Activated CD4-positive, alpha-beta memory T cell treated with anti-CD3 and anti-CD28 coated beads for 36 hours (primary cell): ENCODE measurements at regions of chr19 and their contacts with region 1.

Region 1: DNA sequence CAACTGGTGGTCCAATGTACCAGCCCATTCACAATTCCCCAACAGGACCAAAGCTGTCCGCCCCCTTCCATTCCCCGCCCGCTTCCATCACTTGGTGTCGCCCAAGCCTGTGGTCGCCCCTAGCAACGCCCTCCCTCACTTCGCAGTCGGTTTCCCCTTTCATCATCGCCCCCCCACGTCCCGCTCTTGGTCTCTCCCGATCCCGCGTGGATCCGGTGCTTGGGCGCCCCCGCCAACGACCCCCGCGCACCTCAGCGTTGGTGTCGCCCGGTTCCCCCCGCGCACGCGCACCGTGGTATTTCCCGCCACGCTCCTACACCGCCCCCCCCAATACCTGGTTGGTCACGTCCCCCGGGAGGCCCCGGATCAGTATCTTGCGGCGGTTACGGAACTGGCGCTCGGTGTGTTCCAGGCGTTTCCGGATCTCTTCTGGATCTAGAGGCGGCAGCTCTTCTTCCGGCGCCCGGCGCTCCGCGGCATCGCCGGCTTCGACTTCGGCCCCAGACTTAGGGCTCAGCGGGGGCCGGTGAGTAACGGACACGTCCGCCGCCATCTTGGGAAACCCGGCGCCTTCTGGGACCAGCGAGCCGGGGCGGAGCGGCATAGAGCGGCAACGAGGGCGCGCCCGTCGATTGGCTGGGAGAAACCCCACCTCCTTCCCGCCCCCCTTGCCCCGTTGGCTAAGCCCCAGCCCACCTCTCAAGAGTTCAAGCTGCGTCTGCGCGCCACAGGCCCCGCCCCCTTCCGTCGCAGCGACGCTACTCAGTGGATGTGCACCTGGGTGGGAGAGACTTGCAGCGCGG is at the start of gene RAVER1:
- DNase-seq: peak; percentile 99
- H3K4me3 Mint-ChIP-seq: peak within 1 kb of the TSS; percentile 95
- H3K27ac Mint-ChIP-seq: peak within 1 kb of the TSS; percentile 96
- H3K4me1 Mint-ChIP-seq: peaks cover 37% of the 10 kb centered on the region
- H3K27me3 Mint-ChIP-seq: no peaks in the 10 kb centered on the region
- total RNA-seq, gene RAVER1: 81.5 to 85.0 TPM

Region 2: DNA sequence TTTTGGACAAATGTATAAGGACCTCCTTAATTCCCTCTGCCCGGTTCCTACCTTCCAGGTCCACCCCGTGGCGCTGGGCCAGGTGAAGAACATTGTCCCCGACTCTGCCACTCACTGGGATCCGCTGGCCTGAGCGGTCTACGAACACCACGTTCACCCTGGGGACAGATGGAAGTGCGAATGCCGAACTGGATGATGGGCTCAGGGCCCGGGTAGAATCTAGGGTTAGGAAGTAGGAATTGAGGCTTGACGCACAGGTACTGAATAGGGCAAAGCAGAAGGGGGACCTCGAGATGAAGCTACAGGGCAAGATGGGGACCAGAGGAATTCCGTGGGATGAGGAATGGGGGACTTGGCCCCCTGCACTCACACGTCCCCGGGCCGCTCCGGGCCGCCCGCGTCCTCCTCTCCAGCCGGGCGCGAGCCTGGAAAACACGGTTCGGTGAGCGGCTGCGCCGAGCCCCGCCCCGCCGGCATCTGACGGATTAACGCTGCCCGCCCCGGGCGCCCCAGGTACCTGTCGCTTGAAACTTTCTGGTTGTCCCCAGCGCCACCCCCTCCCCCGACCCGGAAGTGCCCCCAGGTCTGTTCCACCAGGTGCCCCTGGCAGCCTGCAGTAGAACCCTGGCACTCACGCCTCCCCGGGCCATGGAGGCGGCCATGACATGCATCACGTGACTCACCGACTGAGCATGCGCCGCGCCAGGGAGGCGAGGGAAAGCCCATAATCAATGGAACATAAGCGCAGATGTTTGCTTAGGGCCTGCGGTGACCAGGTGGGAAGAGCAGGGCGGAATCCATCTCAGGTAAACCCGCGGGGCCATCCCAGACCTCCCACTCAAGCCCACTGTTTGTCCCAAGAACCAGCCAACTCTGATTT is 17.6 kb before region 1 on chr19 and contains the start of gene FDX2:
- CTCF ChIA-PET with region 1: no interaction called
- POLR2A ChIA-PET with region 1: interaction called, 4 read pairs
- intact Hi-C with region 1: loop called (anchors 2 kb)
- DNase-seq: peak; percentile 94
- H3K4me3 Mint-ChIP-seq: peak within 1 kb of the TSS; percentile 82
- H3K27ac Mint-ChIP-seq: peak within 1 kb of the TSS; percentile 79
- H3K4me1 Mint-ChIP-seq: peaks cover 17% of the 10 kb centered on the region
- H3K27me3 Mint-ChIP-seq: no peaks in the 10 kb centered on the region
- total RNA-seq, gene FDX2: 9.9 to 12.2 TPM

Region 3: GRCh38 chr19:10380313-10381102 is 47.4 kb after region 1 on chr19 and contains the start of gene TYK2:
- CTCF ChIA-PET with region 1: no interaction called
- POLR2A ChIA-PET with region 1: interaction called, 3 read pairs
- intact Hi-C with region 1: loop called (anchors 1 kb)
- DNase-seq: peak; percentile 98
- H3K4me3 Mint-ChIP-seq: peak within 1 kb of the TSS; percentile 88
- H3K27ac Mint-ChIP-seq: peak within 1 kb of the TSS; percentile 88
- H3K4me1 Mint-ChIP-seq: peaks cover 20% of the 10 kb centered on the region
- H3K27me3 Mint-ChIP-seq: no peaks in the 10 kb centered on the region
- total RNA-seq, gene TYK2: 168 to 186 TPM

Region 4: DNA sequence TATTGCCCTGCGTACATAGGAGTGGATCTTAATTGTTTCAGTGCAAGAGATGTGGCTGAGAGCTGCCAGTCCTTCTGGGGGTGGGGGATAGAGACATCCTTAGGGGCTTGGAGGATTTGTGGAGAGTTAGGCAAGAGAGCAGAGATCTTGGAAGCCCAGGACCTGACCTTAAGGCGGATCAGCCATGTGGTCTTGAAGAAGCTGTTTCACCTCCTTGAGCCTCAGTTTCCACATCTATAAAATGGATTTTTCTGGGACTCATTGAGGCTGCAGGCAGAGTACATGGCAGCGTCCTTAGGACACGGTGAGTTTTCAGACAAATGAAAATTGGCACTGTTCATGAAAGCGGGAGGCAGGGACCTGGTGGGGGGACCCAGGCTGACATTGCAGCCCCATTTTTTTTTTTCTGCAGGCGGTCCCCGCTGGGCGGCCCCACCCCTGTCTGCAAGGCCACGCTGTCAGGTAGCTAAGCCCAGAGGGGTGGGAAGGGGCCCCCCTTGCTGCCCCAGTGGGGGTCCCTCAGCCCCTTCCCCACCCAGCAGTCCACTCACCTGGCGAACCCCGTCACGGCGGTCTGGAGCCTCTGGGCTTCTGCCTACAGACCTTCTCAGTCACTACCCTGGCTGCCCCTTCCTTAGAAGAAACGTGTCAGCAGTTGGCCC is 117.2 kb after region 1 on chr19:
- CTCF ChIA-PET with region 1: no interaction called
- POLR2A ChIA-PET with region 1: no interaction called
- intact Hi-C with region 1: no loop called
- DNase-seq: no peak
- H3K4me3 Mint-ChIP-seq: no peak overlapping the region
- H3K27ac Mint-ChIP-seq: no peak overlapping the region
- H3K4me1 Mint-ChIP-seq: no peaks in the 10 kb centered on the region
- H3K27me3 Mint-ChIP-seq: peaks cover 4% of the 10 kb centered on the region